Kidney (tissue), 22 donors: ENCODE measurements at regions of chr20 and their contacts with region 1.

Region 1: DNA sequence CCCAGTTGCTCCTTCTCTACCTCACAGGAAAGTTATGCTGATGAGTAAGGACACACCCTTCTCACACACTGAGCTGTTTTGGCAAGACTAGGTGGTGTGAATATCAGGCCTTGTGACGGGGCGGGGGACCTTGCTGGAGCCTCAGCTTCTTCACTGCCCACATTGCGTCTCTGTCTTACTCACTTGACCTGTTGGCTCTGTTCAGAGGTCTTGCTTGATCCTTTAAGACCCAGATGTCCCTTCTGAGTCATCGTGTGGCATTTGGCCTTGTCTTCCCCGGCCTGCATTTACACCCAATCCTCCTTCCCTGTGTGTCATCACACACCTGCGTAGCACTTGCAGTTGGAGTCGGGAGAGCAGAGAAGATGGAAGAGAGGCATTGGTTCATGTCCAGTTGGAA is 8.3 kb upstream of the PRND start:
- DNase-seq: no peak
- H3K4me3 ChIP-seq: no peak overlapping the region
- H3K27ac ChIP-seq: no peak overlapping the region
- H3K4me1 ChIP-seq: no peaks in the 10 kb centered on the region
- H3K27me3 ChIP-seq: peaks cover 2% of the 10 kb centered on the region
- CTCF ChIP-seq: no peak

Region 2: DNA sequence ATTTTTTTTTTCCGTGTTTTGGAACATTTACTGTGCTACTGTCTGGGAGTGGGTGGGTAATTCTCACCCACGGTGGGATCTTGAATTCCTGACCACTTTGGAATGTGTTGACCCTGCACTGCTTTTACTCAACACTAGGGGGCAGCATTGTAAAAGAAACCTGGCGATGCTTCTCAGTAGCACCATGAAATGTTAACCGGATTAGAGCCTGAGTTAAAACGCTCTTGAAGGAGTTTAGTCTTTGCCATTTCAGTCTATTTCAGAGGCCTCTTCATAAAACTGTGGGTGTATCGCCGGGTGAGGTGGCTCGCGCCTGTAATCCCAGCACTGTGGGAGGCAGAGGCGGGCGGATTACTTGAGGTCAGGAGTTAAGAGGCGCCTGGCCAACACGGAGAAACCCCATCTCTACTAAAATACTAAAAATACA is 106.1 kb before region 1 on chr20:
- intact Hi-C with region 1: loop called (anchors 5 kb)
- DNase-seq: peak in 4 of 5 donors; percentile 54 to 85 (median 70)
- H3K4me3 ChIP-seq: no peak overlapping the region
- H3K27ac ChIP-seq: no peak overlapping the region
- H3K4me1 ChIP-seq: no peaks in the 10 kb centered on the region
- H3K27me3 ChIP-seq: no peaks in the 10 kb centered on the region
- CTCF ChIP-seq: peak; percentile 98